Sigmoid colon (tissue), 7 donors: ENCODE measurements at regions of chr3 and their contacts with region 1.

Region 1: GRCh38 chr3:10026084-10026890 is at the start of gene FANCD2:
- DNase-seq: peak; percentile 92
- H3K4me3 ChIP-seq: peak within 1 kb of the TSS; percentile 73 to 93 (median 83)
- H3K27ac ChIP-seq: peak within 1 kb of the TSS; percentile 77 to 85 (median 81)
- H3K4me1 ChIP-seq: peaks cover 0 to 28% (median 25%) of the 10 kb centered on the region in 4 donors
- H3K27me3 ChIP-seq: no peaks in the 10 kb centered on the region
- CTCF ChIP-seq: no peak
- EP300 ChIP-seq: peak in 1 of 4 donors; percentile 60
- POLR2A ChIP-seq: peak; percentile 74 to 78
- total RNA-seq, gene FANCD2: 1.5 to 5.8 (median 3.1) TPM

Region 2: GRCh38 chr3:9843715-9844438 is 182.4 kb before region 1 on chr3 and contains the start of gene RPUSD3:
- intact Hi-C with region 1: loop called (anchors 10 kb)
- DNase-seq: peak; percentile 99
- H3K4me3 ChIP-seq: peak within 1 kb of the TSS; percentile 56 to 84 (median 78)
- H3K27ac ChIP-seq: peak within 1 kb of the TSS; percentile 80 to 93 (median 89)
- H3K4me1 ChIP-seq: peaks cover 0 to 19% (median 12%) of the 10 kb centered on the region in 4 donors
- H3K27me3 ChIP-seq: no peaks in the 10 kb centered on the region
- CTCF ChIP-seq: no peak
- EP300 ChIP-seq: no peak
- POLR2A ChIP-seq: peak in 1 of 2 donors; percentile 50
- total RNA-seq, gene RPUSD3: 42.6 to 54.7 (median 47.6) TPM

Region 3: GRCh38 chr3:10010486-10011465 is 15.5 kb before region 1 on chr3:
- intact Hi-C with region 1: no loop called
- DNase-seq: peak; percentile 98
- H3K4me3 ChIP-seq: peak overlapping the region; percentile 53 to 67 (median 66)
- H3K27ac ChIP-seq: peak overlapping the region; percentile 80 to 84 (median 81)
- H3K4me1 ChIP-seq: peaks cover 0 to 44% (median 44%) of the 10 kb centered on the region in 4 donors
- H3K27me3 ChIP-seq: no peaks in the 10 kb centered on the region
- CTCF ChIP-seq: no peak
- EP300 ChIP-seq: no peak
- POLR2A ChIP-seq: peak; percentile 35 to 37

Region 4: GRCh38 chr3:10273702-10274305 is 247.5 kb after region 1 on chr3:
- intact Hi-C with region 1: no loop called
- DNase-seq: no peak
- H3K4me3 ChIP-seq: no peak overlapping the region
- H3K27ac ChIP-seq: no peak overlapping the region
- H3K4me1 ChIP-seq: peaks cover 0 to 24% (median 15%) of the 10 kb centered on the region in 4 donors
- H3K27me3 ChIP-seq: no peaks in the 10 kb centered on the region
- CTCF ChIP-seq: no peak
- EP300 ChIP-seq: no peak
- POLR2A ChIP-seq: no peak

Region 5: GRCh38 chr3:10594921-10595320 is 568.6 kb after region 1 on chr3:
- intact Hi-C with region 1: no loop called
- DNase-seq: no peak
- H3K4me3 ChIP-seq: no peak overlapping the region
- H3K27ac ChIP-seq: no peak overlapping the region
- H3K4me1 ChIP-seq: no peaks in the 10 kb centered on the region
- H3K27me3 ChIP-seq: peaks cover 0 to 6% (median 0%) of the 10 kb centered on the region in 3 donors
- CTCF ChIP-seq: no peak
- EP300 ChIP-seq: no peak
- POLR2A ChIP-seq: no peak